PC-9 (cell line): ENCODE measurements at regions of chr7 and their contacts with region 1.

Region 1: DNA sequence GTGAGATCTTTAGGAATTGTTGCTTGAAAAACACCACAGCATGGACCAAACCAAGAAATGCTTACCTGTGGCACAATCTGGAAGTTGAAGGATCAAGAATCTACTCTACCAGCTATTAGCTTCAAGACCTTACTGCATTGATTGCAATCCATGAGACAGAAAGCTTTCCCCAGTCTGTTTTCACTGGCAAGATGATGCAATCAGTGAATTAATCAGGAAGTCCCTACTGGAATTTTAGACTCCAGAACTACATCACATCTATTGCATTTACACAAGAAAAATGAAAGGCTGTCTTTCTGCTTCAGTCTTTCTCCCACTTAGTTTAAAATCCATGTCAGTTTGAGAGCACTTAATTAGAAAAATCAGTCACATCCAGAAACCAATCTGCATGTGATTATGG is 191.7 kb downstream of the TFEC start:
- DNase-seq: no peak
- H3K4me3 ChIP-seq: no peak overlapping the region
- H3K27ac ChIP-seq: no peak overlapping the region
- H3K4me1 ChIP-seq: no peaks in the 10 kb centered on the region
- H3K27me3 ChIP-seq: no peaks in the 10 kb centered on the region
- CTCF ChIP-seq: no peak

Region 2: DNA sequence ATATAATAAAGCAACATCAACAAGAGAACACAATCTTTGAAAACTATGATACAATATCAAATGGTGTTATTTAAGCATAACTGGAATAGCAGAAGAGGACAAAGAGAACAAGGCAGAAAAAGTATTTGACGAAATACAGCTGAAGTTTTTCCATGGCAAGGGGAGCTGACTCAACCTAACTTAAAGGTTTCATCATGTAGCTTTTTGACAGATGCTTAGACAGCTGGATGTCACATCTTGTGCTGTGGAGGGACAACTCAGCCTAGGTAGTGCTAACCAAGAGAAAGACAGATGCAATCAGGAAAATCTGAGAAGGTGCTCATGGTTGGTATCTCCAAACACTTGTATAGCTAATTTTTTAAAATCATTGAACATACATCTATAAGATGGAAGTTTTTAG is 16.4 kb before region 1 on chr7:
- CTCF ChIA-PET with region 1: interaction called, 12 read pairs
- POLR2A ChIA-PET with region 1: no interaction called
- intact Hi-C with region 1: no loop called
- DNase-seq: no peak
- H3K4me3 ChIP-seq: no peak overlapping the region
- H3K27ac ChIP-seq: no peak overlapping the region
- H3K4me1 ChIP-seq: no peaks in the 10 kb centered on the region
- H3K27me3 ChIP-seq: no peaks in the 10 kb centered on the region
- CTCF ChIP-seq: no peak